Left cardiac atrium (tissue), 4 donors: ENCODE measurements at regions of chr6 and their contacts with region 1.

Region 1: GRCh38 chr6:53042112-53042511 is 23.1 kb upstream of the FBXO9 start:
- DNase-seq: no peak
- ATAC-seq: peak; percentile 38 to 68

Region 2: DNA sequence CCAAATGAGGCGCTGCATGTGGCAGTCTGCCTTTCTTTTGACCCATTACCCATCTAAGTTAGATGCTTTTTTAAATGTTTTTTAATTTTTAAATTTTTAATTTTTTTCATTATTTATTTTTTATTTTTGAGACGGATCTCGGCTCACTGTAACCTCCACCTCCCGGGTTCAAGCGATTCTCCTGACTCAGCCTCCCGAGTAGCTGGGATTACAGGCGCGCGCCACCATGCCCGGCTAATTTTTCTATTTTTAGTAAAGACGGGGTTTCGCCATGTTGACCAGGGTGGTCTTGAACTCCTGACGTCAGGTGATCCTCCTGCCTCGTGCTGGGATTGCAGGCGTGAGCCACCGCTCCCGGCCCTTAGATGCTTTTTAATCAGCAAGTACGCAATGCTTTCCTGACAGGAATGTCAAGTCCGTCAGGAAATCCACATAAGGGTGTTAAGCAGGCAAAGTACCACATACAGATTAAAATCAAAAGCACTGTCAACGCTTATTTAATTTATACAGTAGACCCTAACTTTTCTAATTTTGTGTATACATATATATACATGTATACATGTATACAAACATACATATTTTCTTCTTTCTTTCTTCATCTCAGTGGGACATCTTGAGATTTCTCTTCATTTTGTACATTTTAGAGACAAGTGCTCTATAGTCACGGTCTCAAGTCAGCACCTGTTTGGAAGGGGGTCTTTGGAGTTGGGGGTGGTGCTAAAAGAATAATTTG is 46.0 kb before region 1 on chr6:
- intact Hi-C with region 1: loop called in 1 of 2 experiments (anchors 5 kb)
- DNase-seq: peak; percentile 48
- ATAC-seq: peak in 1 of 2 donors; percentile 2